ENCODE measurements at regions of chr15 and their contacts with region 1.

Region 1: GRCh38 chr15:46091860-46092450 is 457.1 kb downstream of the SQOR start:
- DNase-seq: peak; percentile 67
- ATAC-seq: peak; percentile 24; the same call in 1 of the 2 replicates
- H3K4me3 ChIP-seq: no peak overlapping the region
- H3K27ac ChIP-seq: no peak overlapping the region
- H3K4me1 ChIP-seq: peaks cover 24% of the 10 kb centered on the region
- H3K27me3 ChIP-seq: no peaks in the 10 kb centered on the region
- CTCF ChIP-seq: peak; percentile 81

Region 2: DNA sequence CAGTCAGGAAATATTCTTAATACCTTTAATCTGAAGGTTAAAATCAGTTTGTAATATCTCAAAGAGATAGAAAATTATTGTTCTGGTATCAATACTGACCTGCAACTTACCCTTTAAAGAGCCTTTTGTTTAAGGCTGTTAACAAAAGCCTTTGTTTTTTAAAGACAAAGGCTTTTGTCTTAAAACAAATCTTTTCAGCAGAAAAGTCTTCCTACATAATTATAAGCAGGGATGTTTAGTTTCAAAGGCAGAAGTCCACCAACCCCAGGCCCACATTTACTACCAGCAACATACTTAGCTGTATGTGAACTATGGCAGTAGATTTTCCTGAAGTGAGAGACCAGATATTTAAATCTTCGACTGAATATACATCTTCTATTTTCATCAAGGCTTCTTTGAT is 605.6 kb before region 1 on chr15:
- CTCF ChIA-PET with region 1: no interaction called
- POLR2A ChIA-PET with region 1: no interaction called
- intact Hi-C with region 1: no loop called
- DNase-seq: no peak
- ATAC-seq: no peak
- H3K4me3 ChIP-seq: no peak overlapping the region
- H3K27ac ChIP-seq: no peak overlapping the region
- H3K4me1 ChIP-seq: no peaks in the 10 kb centered on the region
- H3K27me3 ChIP-seq: no peaks in the 10 kb centered on the region
- CTCF ChIP-seq: no peak

Region 3: DNA sequence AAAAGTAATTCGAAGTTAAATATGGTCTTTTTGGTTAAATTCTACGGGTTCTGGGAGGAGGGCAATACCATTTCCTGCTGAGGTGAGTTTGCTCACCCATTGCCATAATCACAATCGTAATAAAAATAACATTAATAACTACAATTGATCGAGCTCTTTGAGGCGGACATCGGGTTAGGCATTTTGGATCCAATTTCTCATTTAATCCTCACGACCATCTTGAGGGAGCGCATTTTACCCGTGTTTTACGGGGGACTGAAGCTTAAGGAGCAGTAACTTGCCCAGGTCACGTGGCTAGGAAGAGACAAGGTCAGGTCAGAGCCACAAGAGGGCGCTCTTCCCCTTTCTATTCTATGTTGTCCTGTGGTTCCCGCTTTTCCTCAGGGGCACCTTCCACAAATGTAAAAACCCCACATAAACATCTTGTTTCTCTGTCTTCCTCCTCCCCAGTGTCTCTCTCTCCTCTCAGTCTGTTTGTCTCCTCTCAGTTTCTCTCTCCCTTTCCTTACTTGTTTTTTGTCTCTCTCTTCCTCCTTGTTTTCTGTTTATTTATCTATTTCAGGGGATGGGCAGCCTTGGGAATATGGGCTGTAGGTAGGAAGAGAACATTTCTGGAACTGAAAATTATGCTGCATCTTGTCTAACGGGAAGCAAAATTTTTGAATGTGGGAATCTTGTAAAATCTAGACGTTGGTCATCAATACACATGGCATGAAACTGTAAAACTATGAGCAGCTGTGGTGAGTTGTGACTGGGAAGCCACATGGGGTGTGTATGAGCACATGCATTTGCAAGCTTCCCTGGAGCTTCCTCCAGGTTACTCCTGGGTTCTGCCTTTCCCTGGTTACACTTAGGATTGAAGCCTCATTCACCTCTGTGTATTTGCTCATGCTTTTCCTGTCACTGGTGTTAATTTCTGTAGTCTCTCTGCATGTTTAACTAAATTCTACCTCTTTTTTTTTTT is 386.2 kb before region 1 on chr15:
- CTCF ChIA-PET with region 1: interaction called, 3 read pairs
- POLR2A ChIA-PET with region 1: interaction called, 10 read pairs
- intact Hi-C with region 1: loop called (anchors 5 kb)
- DNase-seq: peak; percentile 86
- ATAC-seq: peak; percentile 92
- H3K4me3 ChIP-seq: peak overlapping the region; percentile 73
- H3K27ac ChIP-seq: no peak overlapping the region
- H3K4me1 ChIP-seq: peaks cover 4% of the 10 kb centered on the region; the same call in 1 of the 2 replicates
- H3K27me3 ChIP-seq: no peaks in the 10 kb centered on the region
- CTCF ChIP-seq: peak; percentile 78

Region 4: GRCh38 chr15:45802140-45802539 is 289.8 kb before region 1 on chr15:
- CTCF ChIA-PET with region 1: interaction called, 3 read pairs
- POLR2A ChIA-PET with region 1: interaction called, 3 read pairs
- intact Hi-C with region 1: loop called (anchors 1 kb)
- DNase-seq: peak; percentile 56
- ATAC-seq: peak; percentile 74
- H3K4me3 ChIP-seq: no peak overlapping the region
- H3K27ac ChIP-seq: peak overlapping the region; percentile 18; the same call in 1 of the 2 replicates
- H3K4me1 ChIP-seq: 0 out of 2 replicates have a peak, but pooled peaks cover 12% of the 10 kb centered on the region
- H3K27me3 ChIP-seq: no peaks in the 10 kb centered on the region
- CTCF ChIP-seq: no peak; the same call in 1 of the 2 replicates

Region 5: GRCh38 chr15:45943240-45943639 is 148.7 kb before region 1 on chr15:
- CTCF ChIA-PET with region 1: no interaction called
- POLR2A ChIA-PET with region 1: interaction called, 4 read pairs
- intact Hi-C with region 1: loop called (anchors 1 kb)
- DNase-seq: peak; percentile 91
- ATAC-seq: peak; percentile 96
- H3K4me3 ChIP-seq: no peak overlapping the region
- H3K27ac ChIP-seq: peak overlapping the region; percentile 66
- H3K4me1 ChIP-seq: peaks cover 18% of the 10 kb centered on the region
- H3K27me3 ChIP-seq: no peaks in the 10 kb centered on the region
- CTCF ChIP-seq: no peak

Region 6: DNA sequence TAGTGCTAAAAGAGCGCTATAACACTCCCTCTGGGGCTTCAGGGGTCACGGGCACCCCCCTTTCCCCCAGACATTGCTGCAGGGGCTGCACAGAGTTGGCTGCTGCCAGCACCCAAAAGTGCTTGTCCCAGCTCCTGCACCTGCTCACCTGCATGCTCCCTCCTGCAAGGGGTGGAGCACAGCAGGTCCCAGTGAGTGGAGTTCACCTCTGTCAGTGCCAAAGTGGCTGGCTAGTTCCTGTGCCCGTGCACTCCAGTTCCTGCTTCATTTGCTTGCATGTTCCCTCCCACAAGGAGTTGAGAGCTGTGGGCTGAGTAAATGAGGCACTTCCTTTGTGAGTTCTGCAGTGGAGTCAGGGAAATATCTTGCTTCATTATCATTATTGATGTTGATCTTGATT is 19.8 kb after region 1 on chr15:
- CTCF ChIA-PET with region 1: no interaction called
- POLR2A ChIA-PET with region 1: no interaction called
- intact Hi-C with region 1: no loop called
- DNase-seq: peak; percentile 25
- ATAC-seq: peak; percentile 31
- H3K4me3 ChIP-seq: no peak overlapping the region
- H3K27ac ChIP-seq: no peak overlapping the region
- H3K4me1 ChIP-seq: no peaks in the 10 kb centered on the region
- H3K27me3 ChIP-seq: no peaks in the 10 kb centered on the region
- CTCF ChIP-seq: no peak

Region 7: DNA sequence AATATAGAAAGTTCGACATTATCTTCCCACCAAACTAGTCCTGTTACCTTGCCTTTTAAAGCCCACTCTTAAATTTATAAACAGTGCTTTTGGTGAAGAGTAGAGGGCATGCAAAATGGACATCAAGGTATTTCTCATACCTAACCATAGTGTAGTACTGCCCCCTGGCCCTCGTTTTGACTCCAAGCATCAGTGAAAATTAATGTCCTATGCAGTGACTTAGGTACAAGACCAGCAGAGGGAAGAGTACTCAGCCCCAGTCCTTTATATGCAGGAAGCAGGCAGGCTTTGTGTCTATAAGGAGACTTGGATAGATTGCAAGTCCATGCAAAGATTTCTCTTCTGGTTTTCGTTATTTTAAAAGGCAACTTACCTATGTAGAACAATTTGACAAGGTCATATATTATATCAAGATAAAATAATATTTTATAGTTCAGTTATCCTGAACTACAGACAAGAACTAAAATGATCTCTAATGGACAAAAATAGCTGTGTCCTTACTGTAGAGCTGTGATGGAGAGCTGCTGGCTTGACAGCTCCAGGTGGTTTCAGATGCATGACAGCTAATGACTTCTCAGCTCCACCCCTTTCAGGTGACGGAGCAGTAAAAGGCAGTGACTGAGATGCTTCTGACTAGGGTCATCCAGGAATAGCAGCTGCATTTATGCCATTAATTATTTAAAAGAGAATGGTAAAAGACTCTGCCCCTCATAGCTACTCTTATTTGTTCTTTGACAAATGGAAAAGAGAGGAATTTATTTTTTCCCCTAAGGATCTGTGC is 189.0 kb after region 1 on chr15:
- CTCF ChIA-PET with region 1: no interaction called
- POLR2A ChIA-PET with region 1: no interaction called
- intact Hi-C with region 1: loop called (anchors 1 kb)
- DNase-seq: peak; percentile 56
- ATAC-seq: peak; percentile 71
- H3K4me3 ChIP-seq: no peak overlapping the region
- H3K27ac ChIP-seq: no peak overlapping the region
- H3K4me1 ChIP-seq: no peaks in the 10 kb centered on the region
- H3K27me3 ChIP-seq: no peaks in the 10 kb centered on the region
- CTCF ChIP-seq: peak; percentile 68

Region 8: DNA sequence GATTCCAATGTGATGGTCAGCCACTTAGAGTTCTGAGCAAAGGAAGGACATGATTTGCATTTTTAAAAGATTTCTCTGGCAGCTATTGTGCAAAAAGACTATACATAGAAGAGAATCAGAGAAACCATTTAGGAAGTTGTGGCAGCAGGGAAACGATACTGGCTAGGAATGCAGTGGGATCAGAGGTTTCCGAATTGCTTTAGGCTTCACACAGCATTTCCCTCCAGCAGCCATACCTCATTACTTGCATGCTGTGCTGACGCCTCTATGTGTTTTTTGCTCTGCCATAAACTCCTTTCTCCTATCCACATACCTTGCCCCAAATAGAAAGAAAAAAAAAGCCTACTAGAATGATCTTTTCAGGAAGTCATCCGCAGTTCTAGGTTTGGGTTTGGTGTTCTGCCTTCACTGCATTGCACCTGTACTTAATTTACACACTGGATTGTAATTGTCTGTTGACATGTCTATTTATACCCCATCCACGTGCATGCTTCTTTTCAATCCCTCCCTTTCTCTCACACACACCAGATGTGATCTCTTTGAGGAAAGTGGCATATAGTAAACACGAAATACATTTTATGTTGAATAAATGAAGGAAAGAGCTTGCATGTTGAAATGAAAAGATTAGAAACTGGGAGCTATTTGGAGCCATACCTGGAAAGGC is 765.0 kb after region 1 on chr15:
- CTCF ChIA-PET with region 1: no interaction called
- POLR2A ChIA-PET with region 1: no interaction called
- intact Hi-C with region 1: no loop called
- DNase-seq: no peak
- ATAC-seq: no peak
- H3K4me3 ChIP-seq: no peak overlapping the region
- H3K27ac ChIP-seq: no peak overlapping the region
- H3K4me1 ChIP-seq: no peaks in the 10 kb centered on the region
- H3K27me3 ChIP-seq: no peaks in the 10 kb centered on the region
- CTCF ChIP-seq: no peak

Measured in PC-3 (cell line).